ENCODE measurements at regions of chr2 and their contacts with region 1.

Region 1: DNA sequence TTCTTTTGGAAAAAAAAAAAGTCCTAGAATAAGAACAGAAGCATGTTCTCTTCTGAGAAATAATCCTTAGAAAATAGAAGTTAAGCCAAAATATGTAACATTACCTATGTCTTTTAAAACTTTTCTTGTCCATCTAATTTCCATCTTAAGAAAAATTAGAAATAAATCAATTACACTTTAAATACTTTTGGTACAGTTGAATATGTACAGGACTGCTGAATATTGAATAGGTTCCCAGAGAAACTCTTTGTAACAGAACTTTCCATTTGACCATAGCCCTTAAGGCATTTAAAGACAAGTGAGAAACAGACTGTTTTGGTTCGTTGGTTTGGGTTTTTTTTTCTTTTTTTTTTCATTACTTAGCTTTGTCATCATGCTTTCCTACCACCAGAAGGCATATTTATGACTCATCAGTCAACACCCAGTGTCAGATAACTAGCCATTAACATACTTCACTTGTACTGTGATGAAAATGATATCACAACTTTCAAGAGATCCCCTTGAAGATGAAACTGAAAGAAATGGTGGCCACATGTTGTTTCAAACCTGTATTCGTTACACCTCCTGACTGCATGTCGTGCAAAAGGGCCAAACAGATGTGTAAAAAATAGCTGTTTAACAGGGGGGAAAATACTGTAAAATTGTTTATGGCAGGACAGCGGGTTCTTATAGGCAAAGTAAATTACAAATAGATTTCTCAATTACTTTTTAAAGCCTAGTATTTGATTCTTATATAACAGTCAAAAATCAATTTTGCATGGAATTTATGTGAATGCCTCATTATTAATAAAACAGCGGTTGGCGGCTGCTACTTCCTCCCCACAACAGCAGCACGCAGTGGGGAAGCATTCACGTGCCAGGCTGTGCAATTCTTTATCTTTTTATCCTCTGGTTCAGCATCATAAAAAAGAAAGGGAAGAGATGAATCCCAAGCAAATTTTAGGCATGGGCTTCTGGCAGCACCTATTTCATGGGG is 280.7 kb upstream of the HNRNPA3 start:
- DNase-seq: peak; percentile 39
- H3K4me3 Mint-ChIP-seq: peak overlapping the region; percentile 58
- H3K27ac Mint-ChIP-seq: peak overlapping the region; percentile 95
- H3K4me1 Mint-ChIP-seq: peaks cover 36% of the 10 kb centered on the region
- H3K27me3 Mint-ChIP-seq: peaks cover 3% of the 10 kb centered on the region

Region 2: DNA sequence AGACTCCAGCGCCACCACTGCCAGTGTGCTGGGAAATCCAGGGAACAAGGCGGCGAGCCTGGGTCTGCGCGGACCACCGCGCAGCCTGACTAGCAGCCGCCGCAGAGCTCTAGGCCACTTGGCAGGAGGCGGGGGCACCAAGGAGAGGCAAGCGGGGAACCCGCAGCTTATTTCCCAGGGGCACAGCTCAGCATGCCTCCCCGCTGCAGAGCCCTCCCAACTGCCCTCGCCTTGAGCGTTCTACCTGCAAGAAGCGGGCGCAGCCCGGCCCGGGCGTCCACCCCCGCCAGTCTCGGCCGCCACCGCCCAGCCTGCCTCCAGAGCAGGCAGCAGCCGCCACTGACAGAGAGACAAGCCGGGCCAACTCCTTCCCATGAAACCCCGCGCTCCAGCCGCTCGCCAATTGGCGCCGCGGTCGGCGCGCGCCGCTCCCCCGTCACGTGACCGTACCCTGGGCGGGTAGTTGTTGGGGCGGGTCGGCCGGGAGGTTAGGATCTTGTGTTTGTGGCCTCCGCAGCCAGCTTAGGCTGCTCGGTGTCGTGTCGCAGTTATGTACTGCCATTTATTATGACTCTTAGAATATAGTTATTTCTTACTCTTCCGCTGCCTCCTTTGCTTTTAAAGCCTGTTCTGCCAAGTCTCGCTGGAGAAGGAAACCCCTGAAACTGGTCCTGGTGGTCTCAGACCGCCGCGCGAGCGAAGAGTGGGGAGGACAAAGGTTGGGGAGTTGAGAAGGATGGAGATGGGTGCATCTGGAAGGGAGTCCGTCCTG is 929.8 kb before region 1 on chr2 and contains the start of gene LNPK:
- intact Hi-C with region 1: loop called (anchors 5 kb)
- DNase-seq: peak; percentile 91
- H3K4me3 Mint-ChIP-seq: peak within 1 kb of the TSS; percentile 95
- H3K27ac Mint-ChIP-seq: peak within 1 kb of the TSS; percentile 91
- H3K4me1 Mint-ChIP-seq: peaks cover 25% of the 10 kb centered on the region
- H3K27me3 Mint-ChIP-seq: peaks cover 5% of the 10 kb centered on the region
- total RNA-seq, gene LNPK: 35.2 and 43.6 TPM in 2 replicates

Region 3: GRCh38 chr2:176826984-176827668 is 104.8 kb before region 1 on chr2:
- intact Hi-C with region 1: loop called (anchors 1 kb)
- DNase-seq: no peak
- H3K4me3 Mint-ChIP-seq: peak overlapping the region; percentile 11
- H3K27ac Mint-ChIP-seq: peak overlapping the region; percentile 67
- H3K4me1 Mint-ChIP-seq: peaks cover 25% of the 10 kb centered on the region
- H3K27me3 Mint-ChIP-seq: peaks cover 6% of the 10 kb centered on the region

Region 4: GRCh38 chr2:176852667-176853066 is 79.2 kb before region 1 on chr2:
- intact Hi-C with region 1: loop called (anchors 1 kb)
- DNase-seq: peak; percentile 56
- H3K4me3 Mint-ChIP-seq: no peak overlapping the region
- H3K27ac Mint-ChIP-seq: peak overlapping the region; percentile 9
- H3K4me1 Mint-ChIP-seq: peaks cover 56% of the 10 kb centered on the region
- H3K27me3 Mint-ChIP-seq: peaks cover 4% of the 10 kb centered on the region

Region 5: GRCh38 chr2:176997074-176997791 is 65.4 kb after region 1 on chr2:
- intact Hi-C with region 1: loop called (anchors 1 kb)
- DNase-seq: peak; percentile 2
- H3K4me3 Mint-ChIP-seq: no peak overlapping the region
- H3K27ac Mint-ChIP-seq: peak overlapping the region; percentile 82
- H3K4me1 Mint-ChIP-seq: peaks cover 29% of the 10 kb centered on the region
- H3K27me3 Mint-ChIP-seq: peaks cover 12% of the 10 kb centered on the region

Region 6: GRCh38 chr2:177207101-177207500 is 275.2 kb after region 1 on chr2:
- intact Hi-C with region 1: loop called (anchors 1 kb)
- DNase-seq: no peak
- H3K4me3 Mint-ChIP-seq: no peak overlapping the region
- H3K27ac Mint-ChIP-seq: peak overlapping the region; percentile 59
- H3K4me1 Mint-ChIP-seq: peaks cover 25% of the 10 kb centered on the region
- H3K27me3 Mint-ChIP-seq: peaks cover 4% of the 10 kb centered on the region

Region 7: GRCh38 chr2:177552422-177553175 is 620.7 kb after region 1 on chr2:
- intact Hi-C with region 1: loop called (anchors 5 kb)
- DNase-seq: peak; percentile 88
- H3K4me3 Mint-ChIP-seq: peak overlapping the region; percentile 95
- H3K27ac Mint-ChIP-seq: peak overlapping the region; percentile 100
- H3K4me1 Mint-ChIP-seq: peaks cover 16% of the 10 kb centered on the region
- H3K27me3 Mint-ChIP-seq: no peaks in the 10 kb centered on the region

Measured in activated T-helper 1 cell treated with anti-CD3 and anti-CD28 coated beads, Interleukin-12 subunit alpha, Interleukin-12 subunit beta, Interleukin-2, Interleukin-4 antibody, amounts not matched to agents 30 ng/mL and 10 ng/mL and 1 ng/mL, durations not matched to agents 14 hours and 24 hours and 36 hours (primary cell).